AG04449 (cell line): ENCODE measurements at regions of chr2 and their contacts with region 1.

Region 1: GRCh38 chr2:67650291-67651133 is 253.4 kb downstream of the ETAA1 start:
- DNase-seq: peak; percentile 92
- H3K4me3 ChIP-seq: no peak overlapping the region
- CTCF ChIP-seq: peak; percentile 89

Region 2: GRCh38 chr2:66429071-66429477 is 1221.4 kb before region 1 on chr2:
- CTCF ChIA-PET with region 1: interaction called, 16 read pairs
- POLR2A ChIA-PET with region 1: interaction called, 3 read pairs
- DNase-seq: no peak
- H3K4me3 ChIP-seq: no peak overlapping the region
- CTCF ChIP-seq: peak; percentile 72

Region 3: GRCh38 chr2:66434679-66435548 is 1215.6 kb before region 1 on chr2 and contains the start of gene MEIS1:
- CTCF ChIA-PET with region 1: interaction called, 10 read pairs
- POLR2A ChIA-PET with region 1: interaction called, 3 read pairs
- DNase-seq: peak; percentile 97
- H3K4me3 ChIP-seq: peak within 1 kb of the TSS; percentile 67
- CTCF ChIP-seq: no peak

Region 4: GRCh38 chr2:67234439-67234838 is 416.1 kb before region 1 on chr2:
- CTCF ChIA-PET with region 1: interaction called, 15 read pairs
- POLR2A ChIA-PET with region 1: no interaction called
- DNase-seq: no peak
- H3K4me3 ChIP-seq: no peak overlapping the region
- CTCF ChIP-seq: peak; percentile 76

Region 5: GRCh38 chr2:67660871-67661270 is 10.4 kb after region 1 on chr2:
- CTCF ChIA-PET with region 1: interaction called, 13 read pairs
- POLR2A ChIA-PET with region 1: no interaction called
- DNase-seq: no peak
- H3K4me3 ChIP-seq: no peak overlapping the region
- CTCF ChIP-seq: no peak

Region 6: DNA sequence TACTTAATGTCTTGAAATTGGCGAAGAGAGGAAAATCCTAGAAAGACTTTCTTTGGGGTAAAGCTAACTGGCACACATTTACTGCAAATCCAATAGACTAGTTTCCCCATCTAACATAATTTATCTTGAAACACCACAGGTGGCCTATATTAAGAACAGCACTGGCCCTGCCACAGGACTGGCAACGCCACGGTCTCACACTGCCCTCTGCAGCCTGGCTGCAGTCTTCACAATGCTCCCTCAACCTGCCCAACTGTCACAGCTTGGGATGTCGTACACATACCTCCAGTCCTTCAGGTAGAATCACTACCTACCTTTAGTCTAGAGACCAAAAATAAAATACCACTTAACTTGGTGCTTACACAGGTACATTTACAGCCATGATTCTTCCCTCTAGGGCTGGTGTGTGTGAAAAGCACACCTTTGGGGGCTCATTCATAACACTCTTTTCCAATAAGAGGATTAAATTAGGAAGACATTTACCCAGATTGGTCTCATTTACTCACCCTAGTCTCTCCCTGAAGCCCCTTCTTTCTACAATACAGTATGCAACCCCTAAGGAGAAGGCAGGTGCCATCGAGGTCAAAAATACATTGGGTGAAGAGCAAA is 190.1 kb after region 1 on chr2:
- CTCF ChIA-PET with region 1: interaction called, 30 read pairs
- POLR2A ChIA-PET with region 1: no interaction called
- DNase-seq: no peak
- H3K4me3 ChIP-seq: no peak overlapping the region
- CTCF ChIP-seq: peak; percentile 90